ENCODE measurements at regions of chr9 and their contacts with region 1.

Region 1: GRCh38 chr9:129932303-129933151 is 97.3 kb downstream of the USP20 start:
- DNase-seq: peak; percentile 47
- ATAC-seq: peak; percentile 52
- H3K4me3 ChIP-seq: no peak overlapping the region
- H3K27ac ChIP-seq: peak overlapping the region; percentile 84
- H3K4me1 ChIP-seq: peaks cover 46% of the 10 kb centered on the region
- H3K27me3 ChIP-seq: no peaks in the 10 kb centered on the region
- CTCF ChIP-seq: no peak
- EP300 ChIP-seq: 0 out of 4 replicates have a peak, but pooled peaks of 1 of the 2 experiments have one; percentile 18
- POLR2A ChIP-seq: no peak
- RAD21 ChIP-seq: no peak

Region 2: GRCh38 chr9:129221233-129221632 is 711.3 kb before region 1 on chr9:
- CTCF ChIA-PET with region 1: no interaction called
- POLR2A ChIA-PET with region 1: no interaction called
- RAD21 ChIA-PET with region 1: no interaction called
- SMC1A ChIA-PET with region 1: no interaction called
- in situ Hi-C with region 1: no loop called
- intact Hi-C with region 1: no loop called
- DNase-seq: no peak
- ATAC-seq: peak; percentile 87
- H3K4me3 ChIP-seq: no peak overlapping the region
- H3K27ac ChIP-seq: no peak overlapping the region; the same call in 1 of the 2 replicates
- H3K4me1 ChIP-seq: peaks cover 25% of the 10 kb centered on the region
- H3K27me3 ChIP-seq: no peaks in the 10 kb centered on the region
- CTCF ChIP-seq: no peak
- EP300 ChIP-seq: no peak
- POLR2A ChIP-seq: no peak
- RAD21 ChIP-seq: no peak

Region 3: GRCh38 chr9:129783516-129784361 is 148.8 kb before region 1 on chr9:
- CTCF ChIA-PET with region 1: no interaction called
- POLR2A ChIA-PET with region 1: no interaction called
- RAD21 ChIA-PET with region 1: no interaction called
- SMC1A ChIA-PET with region 1: no interaction called
- in situ Hi-C with region 1: no loop called
- intact Hi-C with region 1: no loop called
- DNase-seq: peak; percentile 16
- ATAC-seq: peak; percentile 99
- H3K4me3 ChIP-seq: no peak overlapping the region
- H3K27ac ChIP-seq: no peak overlapping the region
- H3K4me1 ChIP-seq: no peaks in the 10 kb centered on the region
- H3K27me3 ChIP-seq: no peaks in the 10 kb centered on the region; a peak in 1 of 4 replicates
- CTCF ChIP-seq: peak; percentile 88 to 94 (median 89)
- EP300 ChIP-seq: no peak
- POLR2A ChIP-seq: no peak
- RAD21 ChIP-seq: peak; percentile 97

Region 4: GRCh38 chr9:129884220-129885017 is 48.1 kb before region 1 on chr9:
- CTCF ChIA-PET with region 1: interaction called, 13 read pairs
- POLR2A ChIA-PET with region 1: interaction called, 11 read pairs
- RAD21 ChIA-PET with region 1: interaction called, 36 read pairs
- SMC1A ChIA-PET with region 1: interaction called, 22 read pairs
- in situ Hi-C with region 1: no loop called
- intact Hi-C with region 1: loop called (anchors 1 kb)
- DNase-seq: peak; percentile 83
- ATAC-seq: peak; percentile 64
- H3K4me3 ChIP-seq: peak overlapping the region; percentile 74
- H3K27ac ChIP-seq: peak overlapping the region; percentile 96
- H3K4me1 ChIP-seq: peaks cover 50% of the 10 kb centered on the region
- H3K27me3 ChIP-seq: no peaks in the 10 kb centered on the region
- CTCF ChIP-seq: 0 out of 6 replicates have a peak, but pooled peaks of 1 of the 3 experiments have one; percentile 2
- EP300 ChIP-seq: no peak
- POLR2A ChIP-seq: peak; percentile 67; the same call in 1 of the 2 replicates
- RAD21 ChIP-seq: no peak

Region 5: DNA sequence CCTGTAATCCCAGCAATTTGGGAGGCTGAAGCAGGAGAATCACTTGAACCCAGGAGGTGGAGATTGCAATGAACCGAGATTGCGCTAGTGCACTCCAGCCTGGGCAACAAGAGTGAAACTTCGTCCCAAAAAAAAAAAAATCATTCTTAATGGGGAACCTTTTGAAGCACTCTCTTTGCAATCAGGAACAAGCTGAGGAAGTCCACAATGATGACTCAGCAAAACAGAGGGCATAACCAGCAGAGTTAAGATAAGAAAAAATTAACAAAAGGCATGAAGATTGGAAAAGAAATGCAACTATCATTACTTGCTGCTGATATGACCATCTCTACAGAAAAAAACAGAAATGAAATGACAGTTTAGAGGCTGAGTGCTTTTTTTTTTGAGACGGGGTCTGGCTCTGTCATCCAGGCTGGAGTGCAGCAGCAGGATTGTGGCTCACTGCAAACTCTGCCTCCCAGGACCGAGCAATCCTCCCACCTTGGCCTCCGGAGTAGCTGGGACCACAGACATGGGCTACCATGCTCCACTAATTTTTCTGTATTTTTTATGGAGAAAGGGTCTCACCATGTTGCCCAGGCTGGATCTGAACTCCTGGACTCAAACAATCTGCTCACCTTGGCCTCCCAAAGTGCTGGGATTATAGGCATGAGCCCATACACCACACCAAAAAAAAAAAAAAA is 22.5 kb after region 1 on chr9:
- CTCF ChIA-PET with region 1: interaction called, 9 read pairs
- POLR2A ChIA-PET with region 1: interaction called, 41 read pairs
- RAD21 ChIA-PET with region 1: interaction called, 34 read pairs
- SMC1A ChIA-PET with region 1: interaction called, 46 read pairs
- in situ Hi-C with region 1: no loop called
- intact Hi-C with region 1: loop called (anchors 2 kb)
- DNase-seq: no peak
- ATAC-seq: no peak
- H3K4me3 ChIP-seq: no peak overlapping the region
- H3K27ac ChIP-seq: peak overlapping the region; percentile 39
- H3K4me1 ChIP-seq: peaks cover 42% of the 10 kb centered on the region
- H3K27me3 ChIP-seq: no peaks in the 10 kb centered on the region
- CTCF ChIP-seq: no peak
- EP300 ChIP-seq: no peak
- POLR2A ChIP-seq: no peak
- RAD21 ChIP-seq: no peak

Region 6: GRCh38 chr9:129988607-129989361 is 56.3 kb after region 1 on chr9:
- CTCF ChIA-PET with region 1: interaction called, 6 read pairs
- POLR2A ChIA-PET with region 1: interaction called, 24 read pairs
- RAD21 ChIA-PET with region 1: interaction called, 16 read pairs
- SMC1A ChIA-PET with region 1: interaction called, 32 read pairs
- in situ Hi-C with region 1: no loop called
- intact Hi-C with region 1: no loop called
- DNase-seq: peak; percentile 99
- ATAC-seq: peak; percentile 65
- H3K4me3 ChIP-seq: peak overlapping the region; percentile 33
- H3K27ac ChIP-seq: peak overlapping the region; percentile 100
- H3K4me1 ChIP-seq: peaks cover 62% of the 10 kb centered on the region
- H3K27me3 ChIP-seq: no peaks in the 10 kb centered on the region
- CTCF ChIP-seq: no peak
- EP300 ChIP-seq: peak; percentile 74 to 96; a peak in 3 of 4 replicates
- POLR2A ChIP-seq: peak; percentile 70
- RAD21 ChIP-seq: peak; percentile 8; the same call in 1 of the 2 replicates

Region 7: DNA sequence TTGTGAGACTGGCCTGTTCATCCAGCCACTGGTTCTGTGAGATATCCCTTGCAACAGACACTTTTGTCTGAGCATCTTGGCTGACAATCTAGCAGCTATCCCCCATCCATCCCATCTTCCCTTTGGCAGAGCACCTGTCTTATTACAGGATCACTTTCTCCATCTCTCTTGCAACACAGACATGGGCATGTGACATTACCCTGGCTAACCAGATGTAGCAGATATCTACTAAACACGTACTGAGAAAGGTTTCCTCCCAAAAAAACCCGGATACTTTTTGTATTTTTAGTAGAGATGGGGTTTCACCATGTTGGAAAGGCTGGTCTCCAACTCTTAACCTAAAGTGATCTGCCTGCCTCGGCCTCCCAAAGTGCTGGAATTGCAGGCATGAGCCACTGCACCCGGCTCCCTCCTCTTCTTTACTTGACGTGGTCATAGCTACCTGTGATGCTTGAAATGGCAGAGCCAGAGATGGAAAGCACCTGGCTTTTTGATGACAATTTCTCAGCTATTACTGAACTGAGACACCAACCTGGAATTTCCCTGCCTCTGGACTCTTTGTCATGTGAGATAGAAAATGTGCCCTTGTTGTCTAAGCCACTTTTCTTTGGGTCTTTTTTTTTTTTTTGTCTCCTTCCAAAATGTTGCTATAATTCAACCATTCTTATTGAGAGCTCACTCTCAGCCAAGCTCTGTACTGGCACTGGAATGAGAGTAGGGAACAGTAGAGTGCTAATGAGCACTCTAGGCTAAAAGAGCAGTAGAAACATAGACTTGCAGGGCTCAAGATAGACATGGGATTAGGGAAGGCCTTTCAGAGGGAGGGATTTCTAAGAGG is 77.8 kb after region 1 on chr9:
- CTCF ChIA-PET with region 1: no interaction called
- POLR2A ChIA-PET with region 1: no interaction called
- RAD21 ChIA-PET with region 1: interaction called, 8 read pairs
- SMC1A ChIA-PET with region 1: interaction called, 10 read pairs
- in situ Hi-C with region 1: no loop called
- intact Hi-C with region 1: no loop called
- DNase-seq: no peak
- ATAC-seq: peak; percentile 59
- H3K4me3 ChIP-seq: peak overlapping the region; percentile 42; the same call in 1 of the 2 replicates
- H3K27ac ChIP-seq: peak overlapping the region; percentile 99
- H3K4me1 ChIP-seq: peaks cover 77% of the 10 kb centered on the region
- H3K27me3 ChIP-seq: no peaks in the 10 kb centered on the region
- CTCF ChIP-seq: no peak
- EP300 ChIP-seq: peak; percentile 77 to 95
- POLR2A ChIP-seq: peak; percentile 61
- RAD21 ChIP-seq: no peak

Region 8: GRCh38 chr9:130023144-130023787 is 90.7 kb after region 1 on chr9:
- CTCF ChIA-PET with region 1: interaction called, 3 read pairs
- POLR2A ChIA-PET with region 1: interaction called, 6 read pairs
- RAD21 ChIA-PET with region 1: interaction called, 14 read pairs
- SMC1A ChIA-PET with region 1: interaction called, 18 read pairs
- in situ Hi-C with region 1: no loop called
- intact Hi-C with region 1: no loop called
- DNase-seq: peak; percentile 88
- ATAC-seq: peak; percentile 47
- H3K4me3 ChIP-seq: peak overlapping the region; percentile 59
- H3K27ac ChIP-seq: peak overlapping the region; percentile 83
- H3K4me1 ChIP-seq: peaks cover 92% of the 10 kb centered on the region
- H3K27me3 ChIP-seq: no peaks in the 10 kb centered on the region
- CTCF ChIP-seq: no peak
- EP300 ChIP-seq: peak; percentile 9 to 85; a peak in 2 of 4 replicates
- POLR2A ChIP-seq: peak; percentile 58
- RAD21 ChIP-seq: no peak

Measured in GM12878 (cell line).